CD4-positive, alpha-beta T cell (primary cell): ENCODE measurements at regions of chr3 and their contacts with region 1.

Region 1: DNA sequence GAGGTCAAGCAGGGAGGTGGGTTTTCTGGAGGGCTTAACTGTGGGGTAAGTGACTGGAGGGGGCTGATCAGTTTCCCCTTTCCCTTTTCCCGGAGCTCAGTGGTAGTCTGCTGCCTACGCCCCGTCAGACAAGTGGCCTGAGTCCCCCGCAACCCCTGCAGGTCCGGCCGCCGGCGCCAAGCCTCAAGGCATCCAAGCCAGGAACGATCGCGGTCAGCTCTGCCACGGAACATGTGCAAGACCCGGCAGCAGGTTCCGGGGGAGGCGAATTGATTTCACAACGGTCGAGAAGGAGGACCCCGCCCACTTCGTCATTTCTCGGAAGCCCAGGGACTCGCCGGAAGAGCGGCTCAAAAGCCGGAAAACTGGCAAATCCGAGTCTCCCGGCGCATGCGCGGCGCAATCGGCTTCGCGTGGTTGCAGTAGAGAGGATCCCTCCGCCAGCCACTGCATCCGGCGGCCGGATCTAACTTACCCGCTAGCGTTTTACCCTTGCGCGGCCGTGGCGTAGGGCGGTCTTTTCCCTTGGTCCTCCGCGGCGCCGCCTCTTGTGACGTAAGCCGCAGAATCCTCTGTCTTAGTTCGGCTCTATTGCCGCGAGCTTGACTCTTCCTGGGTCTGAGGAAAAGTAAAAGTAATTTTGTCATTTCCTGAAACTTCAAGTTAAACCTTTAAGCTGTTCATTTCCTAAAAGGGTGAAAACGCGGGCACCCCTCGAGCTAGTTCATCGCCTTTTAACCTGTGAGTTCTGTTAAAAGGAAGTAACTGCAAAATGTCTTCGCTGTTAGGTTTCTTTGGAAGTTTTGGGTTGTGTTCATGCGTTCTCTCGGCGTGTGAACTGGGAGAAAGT is 14.9 kb upstream of the CCNL1 start:
- DNase-seq: peak; percentile 93 to 100 (median 98)
- ATAC-seq: peak; percentile 91
- H3K4me3 ChIP-seq: peak overlapping the region; percentile 65
- H3K4me3 Mint-ChIP-seq: peak overlapping the region; percentile 92
- H3K27ac ChIP-seq: peak overlapping the region; percentile 96 to 98
- H3K27ac Mint-ChIP-seq: peak overlapping the region; percentile 98
- H3K4me1 ChIP-seq: peaks cover 18% of the 10 kb centered on the region
- H3K4me1 Mint-ChIP-seq: peaks cover 31% of the 10 kb centered on the region
- H3K27me3 ChIP-seq: no peaks in the 10 kb centered on the region
- H3K27me3 Mint-ChIP-seq: no peaks in the 10 kb centered on the region
- CTCF ChIP-seq: no peak

Region 2: DNA sequence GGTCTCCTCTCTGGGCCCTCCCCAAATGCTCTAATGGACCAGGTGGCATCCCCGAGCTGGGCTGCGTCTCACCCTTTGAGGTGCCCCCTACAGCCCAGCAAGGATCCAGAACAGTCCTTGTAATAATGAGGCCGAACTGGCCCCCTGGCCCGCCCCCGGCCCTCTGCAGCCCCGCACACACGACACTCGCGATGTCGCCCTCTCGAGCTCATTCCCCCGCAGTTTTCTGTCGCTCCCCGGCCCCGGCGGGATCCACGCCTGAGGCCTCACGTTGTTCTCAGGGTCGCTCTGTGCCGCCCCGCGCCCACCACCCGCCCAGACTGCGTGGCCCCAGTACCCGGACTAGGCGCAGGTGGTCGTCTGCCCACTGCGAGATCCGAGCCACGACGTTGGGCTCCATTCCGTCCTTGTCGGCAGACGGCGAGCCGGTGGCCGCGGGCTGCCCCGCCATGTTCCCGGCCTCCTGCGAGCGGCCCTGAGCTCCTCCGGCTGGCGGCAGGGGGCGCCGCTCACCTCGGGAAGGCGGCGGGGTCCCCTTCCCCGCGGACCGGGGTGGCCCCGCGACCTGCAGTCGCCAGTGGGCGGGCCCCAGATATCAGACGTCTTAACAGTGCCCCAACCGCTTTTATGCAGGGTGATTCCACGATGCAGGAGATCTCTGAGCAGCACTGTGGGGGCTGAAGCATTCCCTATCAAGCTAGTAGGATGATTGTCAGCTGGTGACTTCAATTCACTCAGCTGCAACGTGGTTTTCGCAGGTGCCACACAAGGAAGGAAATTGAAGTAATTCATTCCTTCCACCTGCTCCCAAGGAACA is 1368.9 kb before region 1 on chr3 and contains the start of gene C3orf33:
- CTCF ChIA-PET with region 1: no interaction called
- POLR2A ChIA-PET with region 1: interaction called, 12 read pairs
- intact Hi-C with region 1: no loop called
- DNase-seq: peak; percentile 46 to 90 (median 71)
- ATAC-seq: peak; percentile 95
- H3K4me3 ChIP-seq: peak within 1 kb of the TSS; percentile 90
- H3K4me3 Mint-ChIP-seq: peak within 1 kb of the TSS; percentile 89
- H3K27ac ChIP-seq: peak within 1 kb of the TSS; percentile 46 to 61
- H3K27ac Mint-ChIP-seq: peak within 1 kb of the TSS; percentile 80
- H3K4me1 ChIP-seq: peaks cover 13% of the 10 kb centered on the region
- H3K4me1 Mint-ChIP-seq: peaks cover 17% of the 10 kb centered on the region
- H3K27me3 ChIP-seq: no peaks in the 10 kb centered on the region
- H3K27me3 Mint-ChIP-seq: peaks cover 6% of the 10 kb centered on the region
- CTCF ChIP-seq: peak; percentile 98
- total RNA-seq, gene C3orf33: 2.4 to 2.6 TPM

Region 3: GRCh38 chr3:155870133-155870944 is 1304.5 kb before region 1 on chr3 and contains the start of gene GMPS:
- CTCF ChIA-PET with region 1: no interaction called
- POLR2A ChIA-PET with region 1: interaction called, 11 read pairs
- intact Hi-C with region 1: loop called (anchors 1 to 5 kb)
- DNase-seq: peak; percentile 87 to 98 (median 95)
- ATAC-seq: peak; percentile 91
- H3K4me3 ChIP-seq: peak within 1 kb of the TSS; percentile 69
- H3K4me3 Mint-ChIP-seq: peak within 1 kb of the TSS; percentile 97
- H3K27ac ChIP-seq: peak within 1 kb of the TSS; percentile 79 to 86
- H3K27ac Mint-ChIP-seq: peak within 1 kb of the TSS; percentile 95
- H3K4me1 ChIP-seq: peaks cover 23% of the 10 kb centered on the region
- H3K4me1 Mint-ChIP-seq: peaks cover 32% of the 10 kb centered on the region
- H3K27me3 ChIP-seq: no peaks in the 10 kb centered on the region
- H3K27me3 Mint-ChIP-seq: no peaks in the 10 kb centered on the region
- CTCF ChIP-seq: peak; percentile 47
- total RNA-seq, gene GMPS: 34.1 to 34.3 TPM

Region 4: DNA sequence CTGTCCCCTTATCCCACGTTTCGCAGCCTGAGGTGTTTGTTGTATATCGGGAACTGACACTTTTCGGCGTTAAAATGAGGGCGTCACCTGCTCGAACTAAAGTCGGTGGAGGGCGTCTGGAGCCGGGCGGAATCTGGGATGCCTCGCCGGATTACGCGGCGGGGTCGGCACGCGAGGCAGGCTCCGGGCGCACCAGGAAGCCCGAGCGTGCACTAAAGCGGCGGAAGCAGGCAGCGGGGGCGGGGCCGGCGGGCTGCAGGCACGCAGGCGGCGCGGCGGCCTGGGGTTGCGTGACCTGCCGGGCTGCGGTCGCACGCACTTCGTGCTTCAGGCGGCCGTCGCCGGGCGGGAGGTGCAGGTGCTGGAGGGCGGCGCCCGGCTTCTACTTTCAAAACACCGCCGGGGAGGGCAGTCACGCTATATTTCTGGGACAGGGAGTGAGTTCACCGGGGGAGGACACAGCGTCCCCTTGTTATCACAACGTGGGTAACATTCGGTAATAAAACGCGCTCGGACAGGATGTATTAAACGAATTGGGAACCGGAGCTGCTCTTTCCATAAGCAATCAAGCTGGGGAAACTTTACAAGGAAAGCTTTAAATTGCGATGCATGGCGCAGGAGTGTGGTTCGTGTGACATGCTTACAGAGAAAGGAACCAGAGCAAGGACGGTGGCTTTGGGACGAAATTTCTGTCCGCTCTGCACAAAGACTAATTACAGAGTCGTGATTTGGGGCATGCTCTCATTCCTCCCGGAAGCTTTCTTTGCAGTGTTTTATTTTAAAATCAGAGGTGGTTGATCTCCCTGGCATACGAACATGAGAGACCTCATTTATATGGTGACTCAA is 357.9 kb before region 1 on chr3:
- CTCF ChIA-PET with region 1: no interaction called
- POLR2A ChIA-PET with region 1: interaction called, 11 read pairs
- intact Hi-C with region 1: no loop called
- DNase-seq: peak; percentile 66 to 97 (median 84)
- ATAC-seq: peak; percentile 81
- H3K4me3 ChIP-seq: peak overlapping the region; percentile 74
- H3K4me3 Mint-ChIP-seq: peak overlapping the region; percentile 93
- H3K27ac ChIP-seq: peak overlapping the region; percentile 65 to 74
- H3K27ac Mint-ChIP-seq: peak overlapping the region; percentile 89
- H3K4me1 ChIP-seq: peaks cover 24% of the 10 kb centered on the region
- H3K4me1 Mint-ChIP-seq: peaks cover 38% of the 10 kb centered on the region
- H3K27me3 ChIP-seq: no peaks in the 10 kb centered on the region
- H3K27me3 Mint-ChIP-seq: no peaks in the 10 kb centered on the region
- CTCF ChIP-seq: no peak

Region 5: DNA sequence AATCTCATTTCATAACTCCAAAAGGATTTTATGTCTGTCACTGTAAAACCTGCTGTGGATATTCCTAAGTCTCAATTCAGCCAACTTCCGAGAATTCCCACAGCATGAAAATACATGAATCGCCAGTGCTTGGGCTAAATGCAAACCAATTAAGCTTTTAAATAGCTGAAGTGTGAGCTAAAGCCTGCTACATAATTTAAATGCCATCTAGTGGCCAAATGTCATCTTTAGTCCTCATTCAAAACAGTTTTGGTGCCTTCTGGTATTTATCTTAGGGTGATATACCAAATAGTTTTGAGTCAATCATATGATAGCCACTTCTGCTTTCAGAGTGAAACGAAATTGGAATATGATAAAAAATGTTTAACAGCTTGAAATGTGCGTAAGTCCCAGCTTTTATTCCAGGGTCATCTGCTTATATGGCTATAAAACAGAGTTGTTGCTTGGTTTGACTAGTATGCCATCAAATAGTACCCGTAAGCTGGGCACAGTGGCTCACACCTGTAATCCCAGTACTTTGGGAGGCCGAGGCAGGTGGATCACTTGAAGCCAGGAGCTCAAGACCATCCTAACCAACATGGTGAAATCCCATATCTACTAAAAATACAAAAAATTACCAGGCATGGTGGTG is 26.9 kb after region 1 on chr3:
- CTCF ChIA-PET with region 1: interaction called, 6 read pairs
- POLR2A ChIA-PET with region 1: interaction called, 16 read pairs
- intact Hi-C with region 1: loop called (anchors 1 to 2 kb)
- DNase-seq: peak in 3 of 14 experiments; percentile 34 to 57 (median 56)
- ATAC-seq: no peak
- H3K4me3 ChIP-seq: no peak overlapping the region
- H3K4me3 Mint-ChIP-seq: no peak overlapping the region
- H3K27ac ChIP-seq: no peak overlapping the region
- H3K27ac Mint-ChIP-seq: no peak overlapping the region
- H3K4me1 ChIP-seq: no peaks in the 10 kb centered on the region
- H3K4me1 Mint-ChIP-seq: peaks cover 5% of the 10 kb centered on the region
- H3K27me3 ChIP-seq: no peaks in the 10 kb centered on the region
- H3K27me3 Mint-ChIP-seq: no peaks in the 10 kb centered on the region
- CTCF ChIP-seq: peak; percentile 67

Region 6: GRCh38 chr3:158644345-158644908 is 1469.6 kb after region 1 on chr3 and contains the start of gene GFM1:
- CTCF ChIA-PET with region 1: no interaction called
- POLR2A ChIA-PET with region 1: no interaction called
- intact Hi-C with region 1: loop called in 1 of 2 experiments (anchors 10 kb)
- DNase-seq: peak; percentile 79 to 97 (median 86)
- ATAC-seq: peak; percentile 94
- H3K4me3 ChIP-seq: peak within 1 kb of the TSS; percentile 99
- H3K4me3 Mint-ChIP-seq: peak within 1 kb of the TSS; percentile 95
- H3K27ac ChIP-seq: peak within 1 kb of the TSS; percentile 54 to 81
- H3K27ac Mint-ChIP-seq: peak within 1 kb of the TSS; percentile 64
- H3K4me1 ChIP-seq: peaks cover 16% of the 10 kb centered on the region
- H3K4me1 Mint-ChIP-seq: peaks cover 53% of the 10 kb centered on the region
- H3K27me3 ChIP-seq: no peaks in the 10 kb centered on the region
- H3K27me3 Mint-ChIP-seq: no peaks in the 10 kb centered on the region
- CTCF ChIP-seq: peak; percentile 92
- total RNA-seq, gene GFM1: 27.5 to 29.4 TPM